AG04450 (cell line): ENCODE measurements at regions of chr1 and their contacts with region 1.

Region 1: DNA sequence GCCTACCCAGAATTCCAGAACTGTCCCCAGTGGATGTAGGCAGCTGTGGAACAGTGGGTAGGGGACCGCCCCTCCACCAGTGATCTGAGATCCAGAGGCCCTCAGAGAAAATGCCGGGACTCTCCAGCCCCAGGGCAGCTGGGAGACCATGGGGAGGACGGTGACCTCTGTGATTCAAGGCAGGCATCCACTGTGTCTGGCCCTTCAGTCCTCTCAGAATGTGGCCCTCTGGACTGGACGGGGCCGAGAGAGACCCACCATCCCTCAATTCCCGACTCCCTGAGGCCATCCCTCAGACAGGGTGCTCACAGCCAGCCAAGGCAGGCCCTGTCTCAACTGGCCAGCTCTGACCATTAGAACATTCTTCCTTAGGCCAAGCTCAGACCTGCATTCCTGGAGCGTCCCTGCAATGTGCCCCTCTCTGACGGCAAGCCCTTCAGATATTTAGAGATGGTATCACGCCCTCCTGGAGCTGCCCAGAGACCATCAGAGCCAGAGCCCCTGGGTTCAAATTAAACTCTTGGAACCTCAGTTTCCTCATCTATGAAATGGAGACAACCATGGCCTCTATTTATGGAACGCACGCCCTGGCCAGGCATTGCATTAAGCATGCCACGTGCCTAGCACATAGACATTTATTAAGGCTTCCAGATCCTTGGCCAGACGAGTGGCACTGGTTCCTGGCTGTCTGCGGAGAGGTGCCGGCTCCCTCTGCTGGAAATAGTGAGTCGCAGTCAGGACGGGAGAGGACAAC is 9.6 kb upstream of the EPS8L3 start:
- DNase-seq: peak; percentile 71
- H3K4me3 ChIP-seq: no peak overlapping the region
- H3K27ac ChIP-seq: no peak overlapping the region
- H3K27me3 ChIP-seq: no peaks in the 10 kb centered on the region
- CTCF ChIP-seq: peak; percentile 98

Region 2: GRCh38 chr1:109539676-109540075 is 233.6 kb before region 1 on chr1 and contains the start of gene GPR61:
- CTCF ChIA-PET with region 1: interaction called, 164 read pairs
- POLR2A ChIA-PET with region 1: no interaction called
- DNase-seq: no peak
- H3K4me3 ChIP-seq: no peak within 1 kb of the TSS
- H3K27ac ChIP-seq: no peak within 1 kb of the TSS
- H3K27me3 ChIP-seq: peaks cover 15% of the 10 kb centered on the region
- CTCF ChIP-seq: no peak
- polyA plus RNA-seq, gene GPR61: not detected in 2 replicates

Region 3: DNA sequence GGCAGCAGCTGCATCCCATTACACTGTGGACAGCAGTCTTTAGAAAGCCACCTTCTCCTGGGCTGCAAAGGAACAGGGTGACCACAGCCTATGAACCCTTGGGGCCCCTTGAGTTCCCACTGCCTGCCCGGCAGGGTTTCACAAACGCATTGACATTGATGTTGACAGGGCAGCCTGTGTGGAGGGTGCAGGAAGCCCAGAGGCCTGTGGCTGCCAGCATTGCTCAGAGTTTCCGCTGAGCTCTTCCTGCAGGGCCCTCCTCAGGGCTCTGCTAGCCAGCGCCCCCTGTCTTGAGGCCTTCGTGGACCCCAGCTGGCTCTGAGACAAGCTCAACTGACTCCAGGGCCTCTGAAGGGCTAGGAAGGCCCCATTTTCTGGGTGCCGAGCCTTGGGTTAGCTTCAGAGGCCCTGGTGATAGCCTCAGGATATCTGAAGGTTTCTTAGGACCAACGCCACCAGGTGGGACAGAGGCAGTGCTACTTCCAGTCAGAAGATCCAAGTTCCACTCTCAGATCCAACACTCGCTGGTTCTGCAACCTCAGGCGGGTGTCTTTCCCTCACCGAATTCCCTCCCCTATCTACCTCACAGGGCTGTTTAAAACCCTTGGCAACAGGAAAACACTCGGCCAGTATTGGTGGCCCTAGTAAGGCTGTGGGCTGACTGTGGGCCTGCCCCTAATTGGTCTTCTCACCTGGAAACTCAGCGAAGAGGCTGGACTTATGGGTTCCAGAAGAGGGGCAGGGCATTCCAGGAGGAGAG is 17.6 kb after region 1 on chr1:
- CTCF ChIA-PET with region 1: interaction called, 16 read pairs
- POLR2A ChIA-PET with region 1: no interaction called
- DNase-seq: no peak
- H3K4me3 ChIP-seq: no peak overlapping the region
- H3K27ac ChIP-seq: no peak overlapping the region
- H3K27me3 ChIP-seq: no peaks in the 10 kb centered on the region
- CTCF ChIP-seq: peak; percentile 37

Region 4: DNA sequence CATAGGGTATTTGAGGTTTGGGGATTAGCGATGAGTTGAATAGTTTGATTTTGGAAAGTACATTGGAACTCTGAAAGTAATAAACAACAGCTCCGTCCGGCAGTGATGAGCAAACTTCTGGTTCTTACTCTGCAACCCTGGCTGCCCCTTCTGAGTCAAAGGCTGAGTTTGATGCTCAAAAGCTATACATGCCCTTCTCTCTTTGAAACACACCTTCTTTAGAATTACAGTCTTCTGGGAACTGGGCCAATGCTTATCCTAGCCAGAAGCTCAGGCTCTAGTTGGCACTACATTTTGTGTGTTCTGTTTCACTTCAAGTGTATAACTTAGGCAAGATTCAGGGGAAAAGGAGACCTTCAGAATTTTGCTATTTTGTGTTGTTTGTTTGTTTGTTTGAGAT is 220.6 kb after region 1 on chr1:
- CTCF ChIA-PET with region 1: interaction called, 535 read pairs
- POLR2A ChIA-PET with region 1: no interaction called
- DNase-seq: no peak
- H3K4me3 ChIP-seq: no peak overlapping the region
- H3K27ac ChIP-seq: no peak overlapping the region
- H3K27me3 ChIP-seq: no peaks in the 10 kb centered on the region
- CTCF ChIP-seq: no peak

Region 5: DNA sequence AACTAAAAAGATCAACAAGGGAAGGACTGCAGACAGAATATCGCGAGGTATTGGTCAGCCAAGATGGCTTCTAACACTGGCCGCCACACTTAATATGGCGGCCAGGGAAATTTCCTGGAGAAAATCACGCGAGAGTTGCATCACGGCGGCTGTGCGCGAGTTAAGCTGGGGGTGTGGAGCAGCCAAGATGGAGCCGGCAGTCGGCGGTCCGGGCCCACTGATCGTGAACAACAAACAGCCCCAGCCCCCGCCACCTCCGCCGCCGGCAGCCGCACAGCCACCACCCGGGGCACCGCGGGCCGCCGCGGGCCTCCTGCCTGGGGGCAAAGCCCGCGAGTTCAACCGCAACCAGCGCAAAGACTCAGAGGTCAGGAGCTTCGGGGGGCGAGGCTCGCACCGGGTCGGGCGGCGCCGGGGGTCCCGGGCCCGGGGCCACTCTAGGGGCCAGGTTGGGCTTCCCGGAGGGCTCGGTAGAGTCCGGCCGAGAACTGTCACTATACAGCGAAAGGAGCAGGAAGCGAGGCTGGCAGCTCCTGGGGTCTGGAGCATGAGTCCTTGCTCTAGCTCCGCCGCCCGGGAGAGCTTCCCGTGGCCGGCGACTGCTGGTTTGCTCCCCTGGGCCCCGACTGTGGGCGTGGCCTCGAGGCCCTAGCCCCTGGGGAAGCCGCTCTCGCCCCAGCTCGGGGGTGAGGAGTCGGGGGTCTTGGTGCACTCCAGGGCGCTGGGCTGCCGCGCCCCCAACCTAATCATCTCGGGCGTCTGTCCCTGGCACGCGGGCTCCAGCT is 261.3 kb after region 1 on chr1 and contains the start of gene STRIP1:
- CTCF ChIA-PET with region 1: interaction called, 11 read pairs
- POLR2A ChIA-PET with region 1: no interaction called
- DNase-seq: peak; percentile 95
- H3K4me3 ChIP-seq: peak within 1 kb of the TSS; percentile 81
- H3K27ac ChIP-seq: peak within 1 kb of the TSS; percentile 54
- H3K27me3 ChIP-seq: no peaks in the 10 kb centered on the region
- CTCF ChIP-seq: no peak
- polyA plus RNA-seq, gene STRIP1: 31.3 and 36.2 TPM in 2 replicates